Naive thymus-derived CD4-positive, alpha-beta T cell (primary cell): ENCODE measurements at regions of chr14 and their contacts with region 1.

Region 1: GRCh38 chr14:75522224-75522982 is at the start of gene BATF:
- DNase-seq: peak; percentile 47 to 83 (median 76)
- ATAC-seq: peak; percentile 89
- H3K4me3 ChIP-seq: peak within 1 kb of the TSS; percentile 84
- H3K4me3 Mint-ChIP-seq: peak within 1 kb of the TSS; percentile 92 to 100 (median 98)
- H3K27ac ChIP-seq: peak within 1 kb of the TSS; percentile 82
- H3K27ac Mint-ChIP-seq: peak within 1 kb of the TSS; percentile 91 to 99 (median 95)
- H3K4me1 ChIP-seq: peaks cover 44 to 49% of the 10 kb centered on the region in 2 donors
- H3K4me1 Mint-ChIP-seq: peaks cover 51 to 80% (median 75%) of the 10 kb centered on the region in 7 donors
- H3K27me3 ChIP-seq: no peaks in the 10 kb centered on the region
- H3K27me3 Mint-ChIP-seq: no peaks in the 10 kb centered on the region
- total RNA-seq, gene BATF: 6.8 to 70.0 (median 10.6) TPM

Region 2: DNA sequence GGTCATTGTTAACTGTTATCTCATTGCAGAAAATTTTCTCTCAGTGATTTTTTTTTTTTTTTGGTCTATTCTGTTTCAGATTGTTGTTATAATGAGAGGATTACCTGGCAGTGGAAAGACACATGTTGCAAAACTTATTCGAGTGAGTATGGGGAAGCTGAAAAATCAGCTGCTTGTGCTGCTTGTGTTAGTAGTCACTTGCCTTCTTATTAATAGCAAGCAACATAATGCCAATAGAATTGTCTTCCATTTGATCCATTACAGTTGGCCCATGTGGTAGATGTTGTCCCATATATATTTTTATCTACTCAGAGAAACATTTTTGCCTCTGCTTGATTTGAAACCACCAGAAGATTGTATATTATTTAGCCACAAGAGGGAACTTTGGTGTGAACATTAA is 706.3 kb before region 1 on chr14:
- CTCF ChIA-PET with region 1: no interaction called
- POLR2A ChIA-PET with region 1: no interaction called
- intact Hi-C with region 1: no loop called
- DNase-seq: no peak
- ATAC-seq: no peak
- H3K4me3 ChIP-seq: no peak overlapping the region
- H3K4me3 Mint-ChIP-seq: no peak overlapping the region
- H3K27ac ChIP-seq: no peak overlapping the region
- H3K27ac Mint-ChIP-seq: peak overlapping the region in 3 of 9 donors; percentile 42 to 81 (median 64)
- H3K4me1 ChIP-seq: no peaks in the 10 kb centered on the region
- H3K4me1 Mint-ChIP-seq: peaks cover 8 to 20% (median 8%) of the 10 kb centered on the region in 7 donors
- H3K27me3 ChIP-seq: no peaks in the 10 kb centered on the region
- H3K27me3 Mint-ChIP-seq: no peaks in the 10 kb centered on the region

Region 3: DNA sequence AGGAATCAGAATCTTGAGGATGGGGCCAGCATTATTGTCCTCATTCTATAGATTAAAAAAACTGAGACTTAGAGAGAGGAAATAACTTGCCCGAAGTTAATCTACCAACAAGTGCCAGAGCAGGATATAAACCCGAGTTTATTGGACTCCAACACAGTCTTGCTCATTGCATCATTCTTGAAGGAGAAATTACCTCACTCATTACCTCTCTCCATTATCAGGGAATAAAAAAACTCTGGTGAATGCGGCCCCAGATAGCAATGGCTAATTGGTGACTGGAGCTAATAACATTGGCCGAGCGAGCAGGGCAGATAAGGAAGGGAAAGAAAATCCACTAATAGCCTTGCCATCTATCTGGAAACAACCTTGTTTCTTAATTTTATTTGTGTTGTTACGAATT is 321.3 kb before region 1 on chr14:
- CTCF ChIA-PET with region 1: no interaction called
- POLR2A ChIA-PET with region 1: no interaction called
- intact Hi-C with region 1: no loop called
- DNase-seq: no peak
- ATAC-seq: no peak
- H3K4me3 ChIP-seq: no peak overlapping the region
- H3K4me3 Mint-ChIP-seq: no peak overlapping the region
- H3K27ac ChIP-seq: no peak overlapping the region
- H3K27ac Mint-ChIP-seq: peak overlapping the region in 1 of 9 donors; percentile 40
- H3K4me1 ChIP-seq: no peaks in the 10 kb centered on the region
- H3K4me1 Mint-ChIP-seq: peaks cover 0 to 19% (median 4%) of the 10 kb centered on the region in 7 donors
- H3K27me3 ChIP-seq: no peaks in the 10 kb centered on the region
- H3K27me3 Mint-ChIP-seq: peaks cover 0 to 13% (median 0%) of the 10 kb centered on the region in 5 donors

Region 4: DNA sequence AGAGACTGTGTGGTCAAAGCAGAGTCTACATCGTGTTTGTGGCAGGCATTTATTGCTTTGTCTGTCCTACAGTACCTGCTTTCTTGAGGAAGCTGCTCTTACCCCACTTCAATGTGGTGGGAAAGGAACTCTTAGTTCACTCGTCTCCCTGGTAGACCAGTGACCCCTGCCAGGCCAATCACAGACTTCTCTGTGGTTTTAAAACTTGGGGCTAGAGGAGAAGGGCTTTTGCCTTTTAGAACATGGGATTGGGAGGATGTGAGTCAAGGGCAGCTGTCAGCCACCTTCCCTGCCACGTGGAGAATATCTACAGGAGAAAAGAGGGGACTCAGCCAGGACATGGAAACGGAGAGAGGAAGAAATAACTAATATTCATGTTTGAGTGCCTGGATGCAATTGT is 309.2 kb before region 1 on chr14:
- CTCF ChIA-PET with region 1: no interaction called
- POLR2A ChIA-PET with region 1: no interaction called
- intact Hi-C with region 1: no loop called
- DNase-seq: no peak
- ATAC-seq: no peak
- H3K4me3 ChIP-seq: no peak overlapping the region
- H3K4me3 Mint-ChIP-seq: peak overlapping the region in 1 of 10 donors; percentile 17
- H3K27ac ChIP-seq: no peak overlapping the region
- H3K27ac Mint-ChIP-seq: peak overlapping the region in 1 of 9 donors; percentile 65
- H3K4me1 ChIP-seq: peaks cover 18 to 23% of the 10 kb centered on the region in 2 donors
- H3K4me1 Mint-ChIP-seq: peaks cover 12 to 32% (median 21%) of the 10 kb centered on the region in 7 donors
- H3K27me3 ChIP-seq: no peaks in the 10 kb centered on the region
- H3K27me3 Mint-ChIP-seq: peaks cover 0 to 15% (median 0%) of the 10 kb centered on the region in 5 donors

Region 5: GRCh38 chr14:75258615-75259466 is 263.6 kb before region 1 on chr14:
- CTCF ChIA-PET with region 1: no interaction called
- POLR2A ChIA-PET with region 1: no interaction called
- intact Hi-C with region 1: loop called in 1 of 2 experiments (anchors 1 kb)
- DNase-seq: peak; percentile 97 to 100 (median 100)
- ATAC-seq: peak; percentile 94
- H3K4me3 ChIP-seq: peak overlapping the region; percentile 75
- H3K4me3 Mint-ChIP-seq: peak overlapping the region; percentile 75 to 95 (median 92)
- H3K27ac ChIP-seq: peak overlapping the region; percentile 94
- H3K27ac Mint-ChIP-seq: peak overlapping the region; percentile 98 to 100 (median 100)
- H3K4me1 ChIP-seq: peaks cover 16 to 19% of the 10 kb centered on the region in 2 donors
- H3K4me1 Mint-ChIP-seq: peaks cover 14 to 50% (median 32%) of the 10 kb centered on the region in 7 donors
- H3K27me3 ChIP-seq: peaks cover 0 to 3% of the 10 kb centered on the region in 2 donors
- H3K27me3 Mint-ChIP-seq: peaks cover 0 to 74% (median 0%) of the 10 kb centered on the region in 5 donors

Region 6: GRCh38 chr14:75542588-75543091 is 20.2 kb after region 1 on chr14:
- CTCF ChIA-PET with region 1: interaction called, 3 read pairs
- POLR2A ChIA-PET with region 1: interaction called, 51 read pairs
- intact Hi-C with region 1: loop called (anchors 1 kb)
- DNase-seq: peak; percentile 42 to 85 (median 65)
- ATAC-seq: peak; percentile 95
- H3K4me3 ChIP-seq: peak overlapping the region; percentile 48
- H3K4me3 Mint-ChIP-seq: peak overlapping the region; percentile 75 to 89 (median 80)
- H3K27ac ChIP-seq: peak overlapping the region; percentile 90
- H3K27ac Mint-ChIP-seq: peak overlapping the region; percentile 94 to 97 (median 96)
- H3K4me1 ChIP-seq: peaks cover 30 to 43% of the 10 kb centered on the region in 2 donors
- H3K4me1 Mint-ChIP-seq: peaks cover 27 to 68% (median 59%) of the 10 kb centered on the region in 7 donors
- H3K27me3 ChIP-seq: no peaks in the 10 kb centered on the region
- H3K27me3 Mint-ChIP-seq: no peaks in the 10 kb centered on the region

Region 7: DNA sequence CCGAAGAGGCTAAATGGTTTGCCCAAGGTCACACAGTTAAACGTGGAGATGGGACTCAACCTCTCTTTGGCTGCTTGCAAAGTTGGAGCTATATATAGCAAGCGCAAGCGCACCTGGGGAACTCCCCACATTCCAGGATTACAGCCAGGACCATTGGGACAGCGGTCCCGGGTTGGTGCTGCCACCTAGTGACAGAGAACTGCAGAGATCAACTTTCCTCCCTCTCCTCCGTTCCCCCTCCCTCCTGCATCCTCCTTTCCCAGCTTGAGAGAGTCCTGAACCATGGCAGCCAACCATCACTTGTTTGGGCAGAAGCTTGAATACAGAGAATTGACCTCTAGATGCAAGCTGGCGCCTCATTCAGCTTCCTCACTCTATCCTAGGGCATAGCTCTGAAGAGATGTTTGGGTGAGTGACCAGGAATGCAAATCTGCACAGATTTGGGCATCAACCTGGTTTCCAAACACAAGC is 38.6 kb after region 1 on chr14:
- CTCF ChIA-PET with region 1: interaction called, 21 read pairs
- POLR2A ChIA-PET with region 1: interaction called, 4 read pairs
- intact Hi-C with region 1: loop called (anchors 1 kb)
- DNase-seq: peak in 4 of 9 donors; percentile 19 to 54 (median 28)
- ATAC-seq: peak; percentile 82
- H3K4me3 ChIP-seq: no peak overlapping the region
- H3K4me3 Mint-ChIP-seq: peak overlapping the region in 7 of 10 donors; percentile 18 to 77 (median 40)
- H3K27ac ChIP-seq: no peak overlapping the region
- H3K27ac Mint-ChIP-seq: peak overlapping the region in 6 of 9 donors; percentile 12 to 68 (median 48)
- H3K4me1 ChIP-seq: peaks cover 4 to 8% of the 10 kb centered on the region in 2 donors
- H3K4me1 Mint-ChIP-seq: peaks cover 17 to 62% (median 39%) of the 10 kb centered on the region in 7 donors
- H3K27me3 ChIP-seq: no peaks in the 10 kb centered on the region
- H3K27me3 Mint-ChIP-seq: no peaks in the 10 kb centered on the region

Region 8: DNA sequence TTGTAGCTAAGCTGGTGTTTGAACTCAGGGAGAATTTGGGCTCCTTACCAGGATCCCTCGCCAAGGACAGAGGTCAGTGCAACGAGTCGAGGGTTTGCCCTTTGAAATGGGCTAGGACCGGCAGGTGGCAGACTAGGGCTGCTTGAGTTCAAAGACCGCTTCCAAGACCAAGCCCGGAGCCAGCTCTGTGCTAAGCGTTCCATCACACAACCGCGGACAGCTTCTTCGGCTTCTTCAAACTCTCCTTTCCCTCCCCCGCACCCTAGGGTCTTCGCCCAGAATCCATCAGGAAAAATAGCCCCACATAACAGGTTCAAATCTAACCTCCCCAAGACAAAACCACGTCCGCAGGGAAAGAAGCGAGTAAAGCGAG is 55.3 kb after region 1 on chr14:
- CTCF ChIA-PET with region 1: interaction called, 3 read pairs
- POLR2A ChIA-PET with region 1: interaction called, 3 read pairs
- intact Hi-C with region 1: loop called in 1 of 2 experiments (anchors 5 kb)
- DNase-seq: peak; percentile 45 to 71 (median 54)
- ATAC-seq: peak; percentile 92
- H3K4me3 ChIP-seq: peak overlapping the region; percentile 64
- H3K4me3 Mint-ChIP-seq: peak overlapping the region in 5 of 10 donors; percentile 90 to 96 (median 93)
- H3K27ac ChIP-seq: peak overlapping the region; percentile 41
- H3K27ac Mint-ChIP-seq: peak overlapping the region; percentile 34 to 86 (median 75)
- H3K4me1 ChIP-seq: peaks cover 9 to 12% of the 10 kb centered on the region in 2 donors
- H3K4me1 Mint-ChIP-seq: peaks cover 6 to 19% (median 9%) of the 10 kb centered on the region in 7 donors
- H3K27me3 ChIP-seq: no peaks in the 10 kb centered on the region
- H3K27me3 Mint-ChIP-seq: peaks cover 0 to 8% (median 0%) of the 10 kb centered on the region in 5 donors

Region 9: DNA sequence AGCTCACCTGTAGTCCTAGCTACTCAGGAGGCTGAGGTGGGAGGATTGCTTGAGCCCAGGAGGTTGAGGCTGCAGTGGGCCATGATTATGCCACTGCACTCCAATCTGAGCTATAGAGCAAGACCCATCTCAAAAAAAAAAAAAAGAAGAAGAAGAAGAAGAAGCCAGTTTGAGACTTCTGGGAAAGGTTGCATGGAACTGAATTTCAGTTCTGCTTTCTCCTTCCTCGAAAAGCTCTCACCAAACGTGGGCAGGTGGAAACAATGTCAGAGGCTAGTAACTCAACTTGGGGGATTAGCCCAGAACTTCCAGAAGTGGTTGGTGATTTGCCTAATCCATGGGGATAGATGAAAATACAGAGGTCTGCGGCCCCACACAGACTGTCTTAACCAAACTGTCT is 74.7 kb after region 1 on chr14:
- CTCF ChIA-PET with region 1: no interaction called
- POLR2A ChIA-PET with region 1: no interaction called
- intact Hi-C with region 1: no loop called
- DNase-seq: no peak
- ATAC-seq: no peak
- H3K4me3 ChIP-seq: no peak overlapping the region
- H3K4me3 Mint-ChIP-seq: no peak overlapping the region
- H3K27ac ChIP-seq: no peak overlapping the region
- H3K27ac Mint-ChIP-seq: no peak overlapping the region
- H3K4me1 ChIP-seq: no peaks in the 10 kb centered on the region
- H3K4me1 Mint-ChIP-seq: peaks cover 0 to 4% (median 0%) of the 10 kb centered on the region in 7 donors
- H3K27me3 ChIP-seq: no peaks in the 10 kb centered on the region
- H3K27me3 Mint-ChIP-seq: no peaks in the 10 kb centered on the region

Region 10: GRCh38 chr14:75982266-75983018 is 460.0 kb after region 1 on chr14:
- CTCF ChIA-PET with region 1: interaction called, 4 read pairs
- POLR2A ChIA-PET with region 1: no interaction called
- intact Hi-C with region 1: loop called in 1 of 2 experiments (anchors 5 kb)
- DNase-seq: peak; percentile 69 to 83 (median 80)
- ATAC-seq: peak; percentile 83
- H3K4me3 ChIP-seq: peak overlapping the region; percentile 83
- H3K4me3 Mint-ChIP-seq: peak overlapping the region; percentile 80 to 99 (median 88)
- H3K27ac ChIP-seq: peak overlapping the region; percentile 84
- H3K27ac Mint-ChIP-seq: peak overlapping the region; percentile 58 to 97 (median 90)
- H3K4me1 ChIP-seq: peaks cover 18 to 32% of the 10 kb centered on the region in 2 donors
- H3K4me1 Mint-ChIP-seq: peaks cover 43 to 64% (median 56%) of the 10 kb centered on the region in 7 donors
- H3K27me3 ChIP-seq: no peaks in the 10 kb centered on the region
- H3K27me3 Mint-ChIP-seq: peaks cover 0 to 24% (median 0%) of the 10 kb centered on the region in 5 donors